Activated T-helper 1 cell treated with anti-CD3 and anti-CD28 coated beads, Interleukin-12 subunit alpha, Interleukin-12 subunit beta, Interleukin-2, Interleukin-4 antibody, amounts not matched to agents 30 ng/mL and 10 ng/mL and 1 ng/mL, durations not matched to agents 14 hours and 24 hours and 36 hours (primary cell): ENCODE measurements at regions of chr10 and their contacts with region 1.

Region 1: GRCh38 chr10:26781797-26782196 is 79.0 kb downstream of the ABI1 start:
- DNase-seq: no peak
- H3K4me3 Mint-ChIP-seq: no peak overlapping the region
- H3K27ac Mint-ChIP-seq: peak overlapping the region; percentile 33
- H3K4me1 Mint-ChIP-seq: peaks cover 71% of the 10 kb centered on the region
- H3K27me3 Mint-ChIP-seq: no peaks in the 10 kb centered on the region

Region 2: GRCh38 chr10:26770069-26770468 is 11.7 kb before region 1 on chr10:
- intact Hi-C with region 1: loop called (anchors 2 kb)
- DNase-seq: no peak
- H3K4me3 Mint-ChIP-seq: no peak overlapping the region
- H3K27ac Mint-ChIP-seq: no peak overlapping the region
- H3K4me1 Mint-ChIP-seq: peaks cover 14% of the 10 kb centered on the region
- H3K27me3 Mint-ChIP-seq: no peaks in the 10 kb centered on the region